Gastrocnemius medialis (tissue), 4 donors: ENCODE measurements at regions of chr14 and their contacts with region 1.

Region 1: GRCh38 chr14:94136575-94137331 is 7.3 kb upstream of the IFI27L2 start:
- DNase-seq: peak; percentile 61 to 79
- ATAC-seq: peak; percentile 90 to 94
- H3K4me3 ChIP-seq: no peak overlapping the region
- H3K27ac ChIP-seq: no peak overlapping the region
- H3K4me1 ChIP-seq: peaks cover 0 to 3% of the 10 kb centered on the region in 2 donors
- H3K27me3 ChIP-seq: no peaks in the 10 kb centered on the region
- CTCF ChIP-seq: peak; percentile 88 to 99 (median 91)
- POLR2A ChIP-seq: no peak

Region 2: GRCh38 chr14:94036313-94037050 is 100.3 kb before region 1 on chr14:
- in situ Hi-C with region 1: loop called (anchors 5 kb)
- intact Hi-C with region 1: loop called (anchors 1 kb)
- DNase-seq: peak; percentile 32 to 64
- ATAC-seq: peak; percentile 82 to 95
- H3K4me3 ChIP-seq: no peak overlapping the region
- H3K27ac ChIP-seq: no peak overlapping the region
- H3K4me1 ChIP-seq: no peaks in the 10 kb centered on the region
- H3K27me3 ChIP-seq: no peaks in the 10 kb centered on the region
- CTCF ChIP-seq: peak; percentile 62 to 87 (median 84)
- POLR2A ChIP-seq: no peak

Region 3: DNA sequence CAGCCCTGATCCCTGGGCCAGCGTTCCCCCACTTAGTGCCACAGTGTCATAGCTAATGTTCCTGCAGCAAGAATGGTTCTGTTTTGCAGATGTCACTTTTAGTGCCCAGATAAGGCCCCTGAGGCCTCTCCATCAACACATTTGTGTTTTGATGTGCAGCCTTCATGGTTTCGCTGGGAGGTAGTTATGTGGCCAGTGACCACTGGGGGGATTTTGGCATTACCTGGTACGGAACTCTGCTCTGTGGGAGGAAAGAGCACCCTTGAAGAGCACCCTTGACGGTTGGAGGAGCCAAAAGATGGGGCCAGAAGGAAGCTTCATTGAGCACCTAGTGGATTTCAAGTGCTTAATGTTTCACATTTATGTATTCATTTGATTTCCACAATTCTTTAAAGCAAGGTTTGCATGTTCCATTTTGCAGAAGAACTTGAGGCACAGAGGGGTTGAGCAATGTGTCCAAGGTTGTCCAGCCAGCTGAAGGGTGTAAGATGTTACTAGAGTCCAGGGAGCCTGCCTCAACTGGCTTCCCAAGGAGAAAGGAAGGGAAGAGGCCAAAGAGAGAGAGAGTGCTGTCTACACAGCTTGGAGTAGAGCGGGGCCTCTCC is 302.8 kb after region 1 on chr14:
- in situ Hi-C with region 1: no loop called
- intact Hi-C with region 1: no loop called
- DNase-seq: no peak
- ATAC-seq: no peak
- H3K4me3 ChIP-seq: no peak overlapping the region
- H3K27ac ChIP-seq: no peak overlapping the region
- H3K4me1 ChIP-seq: no peaks in the 10 kb centered on the region
- H3K27me3 ChIP-seq: peaks cover 0 to 6% (median 0%) of the 10 kb centered on the region in 3 donors
- CTCF ChIP-seq: no peak
- POLR2A ChIP-seq: no peak